ENCODE measurements at regions of chr12 and their contacts with region 1.

Region 1: DNA sequence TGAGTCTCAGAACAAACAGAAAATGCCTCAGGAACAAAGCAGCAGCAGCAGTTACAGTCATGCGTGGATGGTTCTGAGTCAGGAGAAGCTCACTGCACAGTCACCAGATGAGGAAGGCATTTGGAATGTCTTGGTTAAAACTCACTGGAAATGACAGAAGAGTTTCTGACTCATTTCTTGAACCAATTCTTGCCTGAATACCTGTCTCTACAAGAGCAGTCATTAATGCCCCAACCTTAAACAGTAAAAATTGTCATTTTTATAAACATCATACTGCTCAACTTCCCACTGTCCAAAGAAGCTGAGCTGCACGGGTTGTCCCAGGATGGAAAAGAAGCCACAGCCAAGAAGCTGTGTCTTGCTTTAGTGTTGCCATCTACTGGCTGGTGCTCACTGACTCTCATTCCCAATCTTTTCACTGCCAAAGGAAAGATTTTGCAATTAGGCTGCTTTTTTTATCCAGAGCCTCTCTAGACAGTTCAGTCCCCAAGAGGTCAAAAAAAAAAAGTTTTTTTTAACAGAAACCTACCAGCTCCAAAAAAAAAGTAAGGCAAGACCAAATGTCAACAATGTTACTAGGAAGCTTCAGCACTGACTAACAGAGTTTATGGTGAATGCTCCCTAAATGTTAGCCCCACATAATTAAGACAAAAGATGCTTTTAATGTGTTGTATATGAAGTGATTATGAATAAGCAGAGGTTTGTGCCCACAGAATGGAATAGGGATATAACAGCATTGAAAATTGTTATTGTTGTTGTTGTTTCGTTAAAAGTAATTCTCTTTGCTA is 40.4 kb downstream of the KICS2 start:
- DNase-seq: peak; percentile 51
- H3K4me3 ChIP-seq: no peak overlapping the region
- H3K27ac ChIP-seq: peak overlapping the region; percentile 2 to 54 (median 48)
- H3K4me1 ChIP-seq: peaks cover 0 to 8% (median 0%) of the 10 kb centered on the region in 4 donors
- H3K27me3 ChIP-seq: no peaks in the 10 kb centered on the region
- CTCF ChIP-seq: peak; percentile 50 to 68 (median 59)
- EP300 ChIP-seq: peak; percentile 2
- POLR2A ChIP-seq: no peak

Region 2: DNA sequence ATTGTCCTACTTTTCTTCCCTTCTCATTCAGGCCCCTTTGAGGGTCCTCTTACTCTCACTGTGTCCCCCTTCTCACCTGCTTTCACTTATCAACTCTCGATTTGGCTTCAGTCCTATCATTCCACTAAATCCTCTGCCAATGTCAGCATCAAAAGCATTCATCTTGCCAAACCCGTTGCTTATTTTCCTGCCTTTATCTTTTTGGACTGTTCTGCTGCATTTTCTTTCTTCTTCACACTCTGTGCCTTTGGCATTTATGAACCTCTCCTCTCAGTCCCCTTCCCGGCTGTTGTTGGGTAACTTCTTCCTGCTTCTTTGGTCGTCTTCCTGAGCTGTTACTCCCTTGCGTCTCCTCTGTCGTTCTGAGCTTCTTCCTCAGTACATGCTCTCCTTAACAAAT is 1074.3 kb before region 1 on chr12:
- in situ Hi-C with region 1: no loop called
- intact Hi-C with region 1: loop called (anchors 5 kb)
- DNase-seq: no peak
- H3K4me3 ChIP-seq: no peak overlapping the region
- H3K27ac ChIP-seq: no peak overlapping the region
- H3K4me1 ChIP-seq: no peaks in the 10 kb centered on the region
- H3K27me3 ChIP-seq: no peaks in the 10 kb centered on the region
- CTCF ChIP-seq: no peak
- EP300 ChIP-seq: no peak
- POLR2A ChIP-seq: no peak

Region 3: GRCh38 chr12:64221651-64222008 is 39.9 kb after region 1 on chr12:
- in situ Hi-C with region 1: no loop called
- intact Hi-C with region 1: loop called (anchors 2 kb)
- DNase-seq: peak; percentile 89
- H3K4me3 ChIP-seq: peak overlapping the region; percentile 68 to 95 (median 78)
- H3K27ac ChIP-seq: peak overlapping the region; percentile 88 to 97 (median 92)
- H3K4me1 ChIP-seq: peaks cover 4 to 9% (median 7%) of the 10 kb centered on the region in 4 donors
- H3K27me3 ChIP-seq: no peaks in the 10 kb centered on the region
- CTCF ChIP-seq: no peak
- EP300 ChIP-seq: no peak
- POLR2A ChIP-seq: no peak

Region 4: GRCh38 chr12:64256166-64256800 is 74.6 kb after region 1 on chr12:
- in situ Hi-C with region 1: no loop called
- intact Hi-C with region 1: loop called (anchors 10 kb)
- DNase-seq: no peak
- H3K4me3 ChIP-seq: no peak overlapping the region
- H3K27ac ChIP-seq: no peak overlapping the region
- H3K4me1 ChIP-seq: no peaks in the 10 kb centered on the region
- H3K27me3 ChIP-seq: no peaks in the 10 kb centered on the region
- CTCF ChIP-seq: peak; percentile 64 to 75 (median 69)
- EP300 ChIP-seq: no peak
- POLR2A ChIP-seq: no peak